HEK293 (cell line): ENCODE measurements at regions of chr1 and their contacts with region 1.

Region 1: GRCh38 chr1:67685067-67685557 is at the start of gene GADD45A:
- H3K4me3 ChIP-seq: peak within 1 kb of the TSS; percentile 92
- H3K27ac ChIP-seq: peak within 1 kb of the TSS; percentile 96
- H3K4me1 ChIP-seq: peaks cover 8% of the 10 kb centered on the region; the same call in 1 of the 2 replicates
- CTCF ChIP-seq: peak; percentile 50

Region 2: DNA sequence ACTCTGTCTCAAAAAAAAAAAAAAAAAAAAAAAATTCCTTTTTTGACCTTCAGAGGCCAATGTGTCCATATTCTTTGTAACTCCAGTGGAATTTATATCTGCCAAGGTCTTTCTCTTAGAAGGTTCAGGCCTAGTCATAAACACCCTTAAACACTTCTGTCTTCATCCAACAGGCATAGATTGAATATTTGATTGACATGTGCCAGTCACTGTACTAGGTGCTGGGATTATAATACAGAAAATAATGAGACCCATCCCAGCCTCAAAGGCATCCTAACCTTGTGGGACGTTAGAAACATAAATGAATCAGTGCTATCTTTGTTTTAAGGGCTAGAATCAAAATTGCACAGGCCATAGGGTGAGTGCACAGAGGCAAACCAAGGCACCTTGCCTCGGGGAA is 192.0 kb before region 1 on chr1:
- CTCF ChIA-PET with region 1: no interaction called
- POLR2A ChIA-PET with region 1: no interaction called
- H3K4me3 ChIP-seq: no peak overlapping the region
- H3K27ac ChIP-seq: no peak overlapping the region
- H3K4me1 ChIP-seq: no peaks in the 10 kb centered on the region
- CTCF ChIP-seq: no peak

Region 3: DNA sequence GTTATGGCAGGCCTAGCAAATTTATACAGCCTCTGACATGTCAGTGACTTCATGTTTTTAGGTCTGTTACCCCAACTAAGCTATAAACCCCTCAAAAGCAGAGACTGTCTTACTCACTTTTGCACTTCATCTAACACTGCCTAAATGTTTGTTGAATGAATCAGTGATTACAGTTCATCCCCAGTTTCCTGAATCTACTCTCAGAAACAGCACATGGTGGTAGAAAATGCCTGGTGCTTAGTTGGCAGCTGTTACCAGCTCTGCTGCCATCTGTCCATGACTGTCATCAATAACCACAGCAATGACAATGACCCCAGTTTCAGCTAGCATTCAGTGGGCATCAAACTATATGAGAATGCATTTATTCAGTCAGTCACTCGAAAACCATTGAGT is 144.4 kb before region 1 on chr1:
- CTCF ChIA-PET with region 1: interaction called, 13 read pairs
- POLR2A ChIA-PET with region 1: interaction called, 13 read pairs
- H3K4me3 ChIP-seq: no peak overlapping the region
- H3K27ac ChIP-seq: no peak overlapping the region
- H3K4me1 ChIP-seq: no peaks in the 10 kb centered on the region
- CTCF ChIP-seq: no peak

Region 4: GRCh38 chr1:67570473-67571143 is 114.5 kb before region 1 on chr1:
- CTCF ChIA-PET with region 1: interaction called, 3 read pairs
- POLR2A ChIA-PET with region 1: interaction called, 29 read pairs
- H3K4me3 ChIP-seq: no peak overlapping the region
- H3K27ac ChIP-seq: no peak overlapping the region
- H3K4me1 ChIP-seq: no peaks in the 10 kb centered on the region
- CTCF ChIP-seq: no peak

Region 5: DNA sequence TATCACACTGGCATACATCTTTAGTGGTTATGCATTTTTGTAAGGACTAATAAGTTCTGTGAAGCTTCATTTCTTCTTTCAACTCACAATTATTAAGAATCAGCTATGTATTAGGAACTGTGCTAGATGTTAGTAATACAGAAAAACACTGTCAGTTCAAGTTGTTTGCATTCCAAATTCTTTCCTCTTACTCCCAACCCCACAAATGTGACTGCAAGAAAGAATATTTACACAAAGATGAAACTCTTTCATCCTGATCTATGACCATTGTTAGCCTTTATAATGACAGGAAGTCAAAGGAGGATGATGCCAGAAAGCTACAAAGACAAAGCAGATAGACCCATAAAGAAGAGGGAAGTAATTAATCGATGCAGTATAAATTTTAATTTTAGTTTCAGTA is 21.1 kb before region 1 on chr1:
- CTCF ChIA-PET with region 1: no interaction called
- POLR2A ChIA-PET with region 1: interaction called, 10 read pairs
- H3K4me3 ChIP-seq: no peak overlapping the region
- H3K27ac ChIP-seq: no peak overlapping the region
- H3K4me1 ChIP-seq: no peaks in the 10 kb centered on the region
- CTCF ChIP-seq: no peak

Region 6: GRCh38 chr1:67700692-67701410 is 15.7 kb after region 1 on chr1:
- CTCF ChIA-PET with region 1: interaction called, 12 read pairs
- POLR2A ChIA-PET with region 1: interaction called, 77 read pairs
- H3K4me3 ChIP-seq: no peak overlapping the region
- H3K27ac ChIP-seq: peak overlapping the region; percentile 36; the same call in 1 of the 2 replicates
- H3K4me1 ChIP-seq: peaks cover 4% of the 10 kb centered on the region; the same call in 1 of the 2 replicates
- CTCF ChIP-seq: 0 out of 2 replicates have a peak, but pooled peaks have one; percentile 47

Region 7: GRCh38 chr1:67874501-67875111 is 189.5 kb after region 1 on chr1:
- CTCF ChIA-PET with region 1: no interaction called
- POLR2A ChIA-PET with region 1: no interaction called
- H3K4me3 ChIP-seq: no peak overlapping the region
- H3K27ac ChIP-seq: no peak overlapping the region
- H3K4me1 ChIP-seq: no peaks in the 10 kb centered on the region
- CTCF ChIP-seq: no peak